Activated B cell treated with CpG ODN at 0.5 μM for 24 hours (primary cell): ENCODE measurements at regions of chr3 and their contacts with region 1.

Region 1: DNA sequence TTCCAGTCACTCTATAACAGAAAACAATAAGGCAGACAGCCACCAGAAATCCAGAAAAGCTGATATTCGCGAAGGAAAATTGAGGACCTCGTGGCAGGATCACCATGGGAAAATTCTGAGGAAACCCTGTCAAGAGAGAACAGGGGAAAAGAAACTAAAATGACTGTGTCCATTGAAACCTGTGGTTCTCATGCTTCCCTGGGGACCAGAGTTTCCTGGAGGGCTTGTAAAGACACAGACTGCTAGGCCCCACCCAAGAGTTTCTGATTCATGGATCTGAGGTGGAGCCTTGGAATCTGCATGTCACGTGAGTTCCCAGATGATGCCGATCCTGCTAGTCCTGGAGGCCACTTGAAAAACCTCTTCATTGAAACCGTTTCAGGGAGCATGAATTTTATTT is 420.5 kb downstream of the EPHB1 start:
- DNase-seq: no peak
- ATAC-seq: no peak
- H3K4me3 Mint-ChIP-seq: no peak overlapping the region
- H3K27ac Mint-ChIP-seq: no peak overlapping the region
- H3K4me1 Mint-ChIP-seq: no peaks in the 10 kb centered on the region
- H3K27me3 Mint-ChIP-seq: no peaks in the 10 kb centered on the region
- CTCF ChIP-seq: no peak

Region 2: DNA sequence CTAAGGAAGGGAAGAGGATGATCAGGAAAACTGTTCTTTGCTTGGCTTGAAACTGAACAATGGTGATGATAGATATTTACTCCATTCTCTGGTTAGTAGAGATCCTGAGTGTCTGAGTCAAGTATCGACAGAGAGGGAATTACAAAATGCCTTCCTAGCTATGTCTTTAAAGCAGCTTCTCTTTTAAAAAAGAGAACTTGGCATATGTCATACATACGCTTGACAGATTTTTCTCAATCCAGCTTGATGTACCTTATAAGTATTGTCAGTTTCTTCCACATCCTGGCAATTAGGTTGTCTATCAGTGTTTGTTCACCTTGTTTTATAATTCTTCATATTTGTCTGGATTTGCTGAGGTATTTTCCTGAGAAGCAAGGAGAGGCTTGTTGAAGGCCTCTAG is 425.5 kb before region 1 on chr3:
- CTCF ChIA-PET with region 1: no interaction called
- POLR2A ChIA-PET with region 1: no interaction called
- intact Hi-C with region 1: no loop called
- DNase-seq: no peak
- ATAC-seq: no peak
- H3K4me3 Mint-ChIP-seq: no peak overlapping the region
- H3K27ac Mint-ChIP-seq: no peak overlapping the region
- H3K4me1 Mint-ChIP-seq: peaks cover 6% of the 10 kb centered on the region
- H3K27me3 Mint-ChIP-seq: peaks cover 34% of the 10 kb centered on the region
- CTCF ChIP-seq: no peak

Region 3: GRCh38 chr3:135191708-135192107 is 23.8 kb before region 1 on chr3:
- CTCF ChIA-PET with region 1: no interaction called
- POLR2A ChIA-PET with region 1: no interaction called
- intact Hi-C with region 1: loop called (anchors 1 kb)
- DNase-seq: no peak
- ATAC-seq: no peak
- H3K4me3 Mint-ChIP-seq: no peak overlapping the region
- H3K27ac Mint-ChIP-seq: no peak overlapping the region
- H3K4me1 Mint-ChIP-seq: no peaks in the 10 kb centered on the region
- H3K27me3 Mint-ChIP-seq: no peaks in the 10 kb centered on the region
- CTCF ChIP-seq: no peak

Region 4: GRCh38 chr3:135246027-135246426 is 30.5 kb after region 1 on chr3:
- CTCF ChIA-PET with region 1: no interaction called
- POLR2A ChIA-PET with region 1: no interaction called
- intact Hi-C with region 1: no loop called
- DNase-seq: no peak
- ATAC-seq: no peak
- H3K4me3 Mint-ChIP-seq: no peak overlapping the region
- H3K27ac Mint-ChIP-seq: no peak overlapping the region
- H3K4me1 Mint-ChIP-seq: no peaks in the 10 kb centered on the region
- H3K27me3 Mint-ChIP-seq: no peaks in the 10 kb centered on the region
- CTCF ChIP-seq: no peak

Region 5: GRCh38 chr3:135633076-135633475 is 417.6 kb after region 1 on chr3:
- CTCF ChIA-PET with region 1: no interaction called
- POLR2A ChIA-PET with region 1: no interaction called
- intact Hi-C with region 1: no loop called
- DNase-seq: no peak
- ATAC-seq: no peak
- H3K4me3 Mint-ChIP-seq: no peak overlapping the region
- H3K27ac Mint-ChIP-seq: no peak overlapping the region
- H3K4me1 Mint-ChIP-seq: no peaks in the 10 kb centered on the region
- H3K27me3 Mint-ChIP-seq: no peaks in the 10 kb centered on the region
- CTCF ChIP-seq: no peak